Aorta (tissue), 5 donors: ENCODE measurements at regions of chr20 and their contacts with region 1.

Region 1: GRCh38 chr20:35207950-35208611 is 18.4 kb upstream of the MMP24 start:
- DNase-seq: peak; percentile 84 to 86
- ATAC-seq: peak; percentile 96
- H3K4me3 ChIP-seq: peak overlapping the region in 1 of 2 donors; percentile 15
- H3K27ac ChIP-seq: peak overlapping the region in 1 of 2 donors; percentile 96
- H3K4me1 ChIP-seq: no peaks in the 10 kb centered on the region
- H3K27me3 ChIP-seq: no peaks in the 10 kb centered on the region

Region 2: GRCh38 chr20:34825530-34826362 is 382.3 kb before region 1 on chr20 and contains the start of gene NCOA6:
- intact Hi-C with region 1: loop called (anchors 10 kb)
- DNase-seq: peak; percentile 90 to 97
- ATAC-seq: peak; percentile 95
- H3K4me3 ChIP-seq: peak within 1 kb of the TSS; percentile 99 to 100
- H3K27ac ChIP-seq: peak within 1 kb of the TSS; percentile 44 to 64
- H3K4me1 ChIP-seq: peaks cover 0 to 3% of the 10 kb centered on the region in 2 donors
- H3K27me3 ChIP-seq: no peaks in the 10 kb centered on the region
- total RNA-seq, gene NCOA6: 21.3 to 28.1 TPM

Region 3: GRCh38 chr20:34834459-34834893 is 373.6 kb before region 1 on chr20:
- intact Hi-C with region 1: loop called (anchors 10 kb)
- DNase-seq: no peak
- ATAC-seq: no peak
- H3K4me3 ChIP-seq: no peak overlapping the region
- H3K27ac ChIP-seq: no peak overlapping the region
- H3K4me1 ChIP-seq: no peaks in the 10 kb centered on the region
- H3K27me3 ChIP-seq: no peaks in the 10 kb centered on the region

Region 4: DNA sequence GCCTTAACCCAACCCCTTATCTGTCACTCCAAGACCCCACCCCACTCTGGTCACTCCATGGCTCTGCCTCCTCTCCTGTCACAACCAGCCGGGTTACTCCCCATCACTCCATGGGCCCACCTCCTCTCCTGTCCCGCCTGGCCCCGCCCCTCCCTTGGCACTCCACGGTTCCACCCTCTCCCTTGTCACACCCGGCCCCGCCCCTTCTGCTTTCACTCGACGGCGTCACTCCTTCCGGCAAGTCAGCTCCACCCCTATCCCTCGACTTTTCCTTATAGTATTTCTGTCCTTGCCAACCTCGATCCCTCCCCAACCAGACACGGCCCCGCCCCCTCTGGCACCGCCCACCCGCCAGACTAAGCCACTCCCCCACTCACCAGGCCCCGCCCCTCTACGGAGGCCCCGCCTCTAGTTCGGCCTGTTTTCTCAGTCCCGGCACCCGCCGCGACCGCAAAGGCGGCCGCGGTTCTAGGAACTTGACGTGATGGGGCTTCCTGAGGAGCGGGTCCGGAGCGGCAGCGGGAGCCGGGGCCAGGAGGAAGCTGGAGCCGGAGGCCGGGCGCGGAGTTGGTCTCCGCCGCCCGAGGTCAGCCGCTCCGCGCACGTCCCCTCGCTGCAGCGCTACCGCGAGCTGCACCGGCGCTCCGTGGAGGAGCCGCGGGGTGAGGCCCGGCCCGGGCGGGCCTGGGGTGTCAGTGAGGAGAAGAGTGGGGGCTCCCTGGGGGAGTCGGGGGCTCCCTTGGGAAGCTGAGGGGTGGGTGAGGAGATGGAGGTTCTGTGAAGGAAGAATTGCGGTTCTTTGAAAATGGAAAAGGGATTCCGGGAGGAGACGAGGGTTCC is 331.7 kb before region 1 on chr20 and contains the start of gene ACSS2:
- intact Hi-C with region 1: loop called in 1 of 2 experiments (anchors 2 kb)
- DNase-seq: peak; percentile 100
- ATAC-seq: peak; percentile 94
- H3K4me3 ChIP-seq: peak within 1 kb of the TSS; percentile 64 to 98
- H3K27ac ChIP-seq: peak within 1 kb of the TSS; percentile 52 to 83
- H3K4me1 ChIP-seq: peaks cover 0 to 4% of the 10 kb centered on the region in 2 donors
- H3K27me3 ChIP-seq: no peaks in the 10 kb centered on the region
- total RNA-seq, gene ACSS2: 64.8 to 87.4 TPM

Region 5: DNA sequence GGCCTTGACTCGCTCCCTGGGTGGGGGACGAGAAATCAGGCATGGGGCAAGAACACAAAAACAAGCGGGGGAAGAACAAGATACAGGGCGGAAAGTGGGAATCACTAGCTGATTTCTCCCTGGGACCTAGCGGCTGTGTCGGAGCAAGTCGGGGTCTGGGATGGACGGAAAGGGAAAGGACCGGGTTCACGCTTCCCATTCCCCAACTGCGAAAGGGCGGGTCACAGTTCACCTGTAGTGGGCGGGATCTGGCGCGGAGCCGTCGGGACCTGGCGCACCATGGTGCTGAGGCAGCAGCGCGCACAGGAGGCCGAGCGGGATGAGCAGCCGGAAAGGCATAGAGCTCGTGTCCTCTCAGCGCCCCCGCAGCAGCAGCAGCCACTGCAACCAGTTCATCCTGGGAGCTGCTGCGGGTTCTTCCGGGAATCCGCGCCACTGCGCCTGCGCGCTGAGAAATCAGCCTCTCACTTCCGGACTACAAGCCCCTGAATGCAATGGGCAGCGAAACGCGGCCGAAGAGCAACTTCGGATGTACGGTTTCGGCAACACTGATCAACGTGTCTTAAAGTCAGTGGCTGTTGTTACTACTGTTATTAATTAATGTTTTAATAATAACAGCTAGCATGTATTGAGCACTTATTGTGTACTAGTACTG is 61.0 kb before region 1 on chr20 and contains the start of gene EDEM2:
- intact Hi-C with region 1: loop called in 1 of 2 experiments (anchors 5 kb)
- DNase-seq: peak; percentile 96 to 99
- ATAC-seq: peak; percentile 96
- H3K4me3 ChIP-seq: peak within 1 kb of the TSS; percentile 45 to 49
- H3K27ac ChIP-seq: peak within 1 kb of the TSS in 1 of 2 donors; percentile 10
- H3K4me1 ChIP-seq: no peaks in the 10 kb centered on the region
- H3K27me3 ChIP-seq: no peaks in the 10 kb centered on the region
- total RNA-seq, gene EDEM2: 21.6 to 23.4 TPM

Region 6: DNA sequence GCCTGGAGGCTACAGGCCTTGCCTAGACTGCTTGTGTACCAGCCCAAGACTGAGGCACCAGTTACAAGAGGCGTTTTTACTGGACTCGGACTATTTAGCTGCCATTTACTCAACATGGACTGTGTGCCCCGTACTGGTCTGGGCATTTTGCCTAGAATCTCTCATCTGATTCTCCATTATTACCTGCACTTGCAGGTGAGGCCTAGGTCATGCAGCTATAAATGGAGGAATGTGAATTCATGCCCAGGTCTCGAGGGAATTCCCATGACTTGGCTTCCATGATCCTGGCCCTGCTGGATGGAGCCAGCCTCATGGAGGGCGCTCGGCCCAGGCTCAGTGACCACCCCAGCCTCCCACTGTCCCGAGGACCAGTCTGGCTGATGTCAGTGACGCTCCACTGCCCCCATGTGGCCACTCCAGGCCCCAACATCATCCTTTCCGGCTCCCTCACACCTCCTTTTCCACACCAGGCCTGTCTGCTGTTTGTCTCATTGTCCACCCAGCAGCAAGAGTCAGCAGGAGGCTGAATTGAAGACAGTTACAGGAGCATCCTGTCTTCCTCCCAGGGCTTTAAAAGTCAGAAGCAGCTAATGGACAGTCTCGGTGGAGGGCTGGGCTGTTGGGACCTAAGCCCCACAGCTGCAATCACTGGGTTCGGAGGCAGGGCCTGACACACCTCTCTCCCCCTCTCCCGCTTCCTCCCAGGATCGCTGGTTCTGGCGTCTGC is 61.1 kb after region 1 on chr20:
- intact Hi-C with region 1: loop called in 1 of 2 experiments (anchors 10 kb)
- DNase-seq: peak in 1 of 2 donors; percentile 89
- ATAC-seq: peak; percentile 81
- H3K4me3 ChIP-seq: no peak overlapping the region
- H3K27ac ChIP-seq: no peak overlapping the region
- H3K4me1 ChIP-seq: no peaks in the 10 kb centered on the region
- H3K27me3 ChIP-seq: no peaks in the 10 kb centered on the region

Region 7: GRCh38 chr20:35592339-35592974 is 384.4 kb after region 1 on chr20:
- intact Hi-C with region 1: no loop called
- DNase-seq: no peak
- ATAC-seq: no peak
- H3K4me3 ChIP-seq: no peak overlapping the region
- H3K27ac ChIP-seq: no peak overlapping the region
- H3K4me1 ChIP-seq: no peaks in the 10 kb centered on the region
- H3K27me3 ChIP-seq: no peaks in the 10 kb centered on the region